ENCODE measurements at regions of chr6 and their contacts with region 1.

Region 1: GRCh38 chr6:160348142-160349019 is at the start of gene SLC22A3:
- DNase-seq: no peak
- H3K4me3 ChIP-seq: peak within 1 kb of the TSS; percentile 64 to 86
- H3K27ac ChIP-seq: peak within 1 kb of the TSS; percentile 89
- H3K4me1 ChIP-seq: peaks cover 18% of the 10 kb centered on the region
- H3K27me3 ChIP-seq: no peaks in the 10 kb centered on the region
- CTCF ChIP-seq: peak in 2 of 3 experiments; percentile 21 to 33
- POLR2A ChIP-seq: no peak
- total RNA-seq, gene SLC22A3: 16.5 TPM

Region 2: DNA sequence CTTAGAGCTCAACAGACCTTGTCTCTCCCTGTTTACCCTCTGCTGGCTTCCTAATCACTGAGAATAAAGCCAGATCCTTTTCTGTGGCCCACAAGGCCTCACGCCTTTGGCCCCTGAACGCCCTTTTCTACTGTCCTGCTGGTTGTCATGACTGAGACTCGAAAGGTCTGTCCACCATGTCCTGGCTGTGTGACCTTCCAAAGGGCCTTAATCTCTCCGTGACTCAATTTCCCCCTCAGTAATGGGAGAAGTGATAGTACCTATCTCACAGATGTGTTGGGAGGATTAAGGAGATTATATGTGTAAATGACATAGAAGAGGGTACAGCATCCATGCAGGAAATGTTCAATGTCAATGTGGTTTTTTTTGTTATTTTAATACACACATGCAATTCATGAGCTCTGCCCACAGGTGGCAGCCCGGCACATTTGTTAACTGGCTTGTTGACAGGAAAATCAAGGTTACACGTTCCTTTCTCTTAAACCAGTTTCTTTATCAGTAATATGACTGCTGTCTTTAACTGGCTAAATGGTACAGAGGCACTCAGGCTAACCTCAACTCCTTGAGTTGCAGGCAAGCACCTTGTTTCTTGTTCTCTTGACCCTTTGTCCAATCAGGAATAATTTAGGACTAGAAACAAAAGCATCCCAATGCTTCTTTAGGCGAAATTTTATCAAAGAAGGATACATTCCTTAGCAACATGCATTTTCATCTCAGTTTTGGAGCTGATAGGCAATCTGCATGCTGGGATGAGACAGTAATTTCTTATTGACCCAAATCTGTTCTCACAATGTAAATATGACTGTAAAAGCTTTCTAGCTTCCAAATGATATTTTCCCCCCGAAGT is 210.2 kb before region 1 on chr6:
- intact Hi-C with region 1: loop called (anchors 5 kb)
- DNase-seq: no peak
- H3K4me3 ChIP-seq: no peak overlapping the region
- H3K27ac ChIP-seq: peak overlapping the region; percentile 68
- H3K4me1 ChIP-seq: peaks cover 32% of the 10 kb centered on the region
- H3K27me3 ChIP-seq: no peaks in the 10 kb centered on the region
- CTCF ChIP-seq: peak; percentile 56 to 63 (median 61)
- POLR2A ChIP-seq: no peak